ENCODE measurements at regions of chr5 and their contacts with region 1.

Region 1: GRCh38 chr5:72847989-72848473 is 31.6 kb downstream of the TNPO1 start:
- DNase-seq: peak; percentile 88
- ATAC-seq: peak; percentile 83
- H3K4me3 Mint-ChIP-seq: peak overlapping the region; percentile 97
- H3K27ac Mint-ChIP-seq: peak overlapping the region; percentile 97
- H3K4me1 Mint-ChIP-seq: peaks cover 27% of the 10 kb centered on the region
- H3K27me3 Mint-ChIP-seq: peaks cover 8% of the 10 kb centered on the region

Region 2: DNA sequence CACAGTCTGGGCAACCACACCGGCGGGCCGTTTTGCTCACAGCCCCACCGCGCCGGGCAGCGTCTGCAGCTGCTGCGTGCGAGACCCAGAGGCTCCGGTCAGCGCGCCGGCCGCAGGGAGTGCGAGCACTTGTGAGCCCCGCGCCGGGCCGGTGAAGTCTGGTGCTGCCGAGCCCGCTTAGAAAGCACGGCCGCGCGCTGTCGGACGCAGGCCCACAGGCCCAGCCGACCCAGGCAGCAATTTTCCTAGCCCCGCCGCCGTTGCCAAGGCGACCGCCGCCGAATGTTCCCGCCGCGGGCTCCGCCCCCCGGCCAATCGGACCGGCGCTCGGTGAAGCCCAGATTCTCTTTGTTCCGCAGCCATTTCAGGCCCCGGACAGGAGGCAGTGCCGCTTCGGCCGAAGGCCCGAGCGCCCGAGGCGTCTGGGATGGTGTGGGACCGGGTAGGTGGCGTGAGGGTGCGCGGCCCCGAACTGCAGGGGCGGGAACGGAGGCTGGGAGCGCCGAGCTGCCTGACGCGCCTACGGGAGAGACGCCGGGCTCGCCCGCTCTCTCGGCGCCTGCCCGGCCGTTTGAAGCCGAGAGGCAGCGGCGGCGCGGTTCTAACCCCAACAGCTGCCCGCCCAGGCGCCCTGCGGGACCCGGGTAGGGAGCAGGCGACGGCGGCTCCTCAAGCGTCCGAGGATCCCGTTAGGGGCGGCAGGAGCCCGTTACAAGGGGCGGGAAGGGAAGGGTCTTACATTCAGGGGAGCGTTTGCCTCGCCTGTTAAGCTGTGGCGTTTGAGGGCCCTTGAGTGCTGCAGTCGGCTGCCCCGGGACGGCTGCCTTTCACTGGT is 31.5 kb before region 1 on chr5 and contains the start of gene TNPO1:
- POLR2A ChIA-PET with region 1: interaction called, 30 read pairs
- DNase-seq: peak; percentile 88
- ATAC-seq: peak; percentile 80
- H3K4me3 Mint-ChIP-seq: peak within 1 kb of the TSS; percentile 94
- H3K27ac Mint-ChIP-seq: peak within 1 kb of the TSS; percentile 88
- H3K4me1 Mint-ChIP-seq: peaks cover 22% of the 10 kb centered on the region
- H3K27me3 Mint-ChIP-seq: peaks cover 20% of the 10 kb centered on the region
- total RNA-seq, gene TNPO1: 76.2 to 81.0 TPM

Region 3: DNA sequence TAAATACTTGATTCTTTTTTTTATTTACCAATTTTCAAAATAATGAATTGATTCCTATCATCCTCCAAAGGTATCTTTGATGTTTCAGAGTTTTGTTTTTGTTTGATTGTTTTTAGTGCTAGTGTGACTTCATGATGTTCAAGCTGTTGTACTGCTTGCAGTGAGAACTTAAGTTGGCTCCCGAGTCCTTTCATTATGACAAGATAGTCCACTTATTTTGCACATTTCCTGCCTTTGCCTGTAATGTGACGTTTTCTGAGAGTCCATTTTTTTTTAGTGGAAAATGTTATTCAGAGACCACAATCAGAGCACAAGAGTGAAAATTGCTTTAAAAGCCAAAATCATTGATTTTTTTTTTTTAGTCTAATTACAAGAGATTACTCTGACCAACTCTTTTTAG is 47.7 kb after region 1 on chr5:
- POLR2A ChIA-PET with region 1: no interaction called
- DNase-seq: no peak
- ATAC-seq: peak; percentile 50
- H3K4me3 Mint-ChIP-seq: no peak overlapping the region
- H3K27ac Mint-ChIP-seq: no peak overlapping the region
- H3K4me1 Mint-ChIP-seq: peaks cover 5% of the 10 kb centered on the region
- H3K27me3 Mint-ChIP-seq: no peaks in the 10 kb centered on the region